Gastrocnemius medialis (tissue), 4 donors: ENCODE measurements at regions of chr11 and their contacts with region 1.

Region 1: GRCh38 chr11:57667736-57668435 is at the start of gene ZDHHC5:
- DNase-seq: peak; percentile 99
- ATAC-seq: peak; percentile 90 to 92
- H3K4me3 ChIP-seq: peak within 1 kb of the TSS; percentile 70 to 85 (median 76)
- H3K27ac ChIP-seq: peak within 1 kb of the TSS; percentile 92 to 97 (median 94)
- H3K4me1 ChIP-seq: peaks cover 19 to 34% of the 10 kb centered on the region in 2 donors
- H3K27me3 ChIP-seq: no peaks in the 10 kb centered on the region
- CTCF ChIP-seq: peak in 4 of 5 experiments; percentile 35 to 79 (median 69)
- POLR2A ChIP-seq: peak; percentile 81 to 85
- total RNA-seq, gene ZDHHC5: 34.0 to 49.2 (median 46.2) TPM

Region 2: DNA sequence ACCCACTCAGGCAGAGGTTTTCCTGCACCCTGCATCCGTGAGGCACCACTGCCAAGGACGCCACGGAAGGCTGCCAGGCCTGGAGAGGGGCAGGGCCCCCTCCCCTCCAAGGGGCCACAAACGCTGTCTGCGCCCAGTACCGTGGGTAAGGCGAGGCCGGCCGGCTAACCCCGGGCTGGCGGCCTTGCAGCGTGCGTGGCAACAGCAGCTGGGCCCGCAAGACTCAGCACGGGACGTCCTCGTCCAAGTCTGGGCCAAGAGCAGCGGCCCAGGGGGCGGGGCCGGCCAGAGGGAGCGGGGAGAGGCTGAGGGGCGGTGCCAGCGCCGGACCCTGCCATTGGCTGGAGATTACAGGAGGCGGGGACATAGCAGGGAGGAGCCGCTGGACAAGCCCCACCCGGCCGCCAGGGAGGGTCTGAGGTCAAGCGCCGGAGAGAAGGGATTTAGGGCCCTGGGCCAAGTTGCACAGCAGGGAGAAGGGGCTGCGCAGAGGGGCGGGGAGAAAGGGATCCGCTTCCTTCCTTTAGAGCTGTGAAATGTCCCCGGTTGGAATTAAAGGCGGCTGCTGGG is 168.4 kb before region 1 on chr11:
- in situ Hi-C with region 1: no loop called
- intact Hi-C with region 1: loop called (anchors 1 kb)
- DNase-seq: peak; percentile 98 to 99
- ATAC-seq: peak; percentile 90 to 91
- H3K4me3 ChIP-seq: peak overlapping the region; percentile 29 to 53 (median 44)
- H3K27ac ChIP-seq: peak overlapping the region; percentile 87 to 95 (median 92)
- H3K4me1 ChIP-seq: peaks cover 30 to 40% of the 10 kb centered on the region in 2 donors
- H3K27me3 ChIP-seq: no peaks in the 10 kb centered on the region
- CTCF ChIP-seq: peak in 2 of 5 experiments; percentile 28 to 34
- POLR2A ChIP-seq: peak; percentile 67 to 81

Region 3: GRCh38 chr11:57657194-57658022 is 10.5 kb before region 1 on chr11 and contains the start of gene CLP1:
- in situ Hi-C with region 1: no loop called
- intact Hi-C with region 1: loop called (anchors 1 kb)
- DNase-seq: peak; percentile 99
- ATAC-seq: peak; percentile 99
- H3K4me3 ChIP-seq: peak within 1 kb of the TSS; percentile 62 to 92 (median 79)
- H3K27ac ChIP-seq: peak within 1 kb of the TSS; percentile 84 to 94 (median 91)
- H3K4me1 ChIP-seq: peaks cover 8 to 23% of the 10 kb centered on the region in 2 donors
- H3K27me3 ChIP-seq: no peaks in the 10 kb centered on the region
- CTCF ChIP-seq: no peak
- POLR2A ChIP-seq: peak; percentile 64 to 80
- total RNA-seq, gene CLP1: 10.6 to 15.3 (median 11.2) TPM

Region 4: DNA sequence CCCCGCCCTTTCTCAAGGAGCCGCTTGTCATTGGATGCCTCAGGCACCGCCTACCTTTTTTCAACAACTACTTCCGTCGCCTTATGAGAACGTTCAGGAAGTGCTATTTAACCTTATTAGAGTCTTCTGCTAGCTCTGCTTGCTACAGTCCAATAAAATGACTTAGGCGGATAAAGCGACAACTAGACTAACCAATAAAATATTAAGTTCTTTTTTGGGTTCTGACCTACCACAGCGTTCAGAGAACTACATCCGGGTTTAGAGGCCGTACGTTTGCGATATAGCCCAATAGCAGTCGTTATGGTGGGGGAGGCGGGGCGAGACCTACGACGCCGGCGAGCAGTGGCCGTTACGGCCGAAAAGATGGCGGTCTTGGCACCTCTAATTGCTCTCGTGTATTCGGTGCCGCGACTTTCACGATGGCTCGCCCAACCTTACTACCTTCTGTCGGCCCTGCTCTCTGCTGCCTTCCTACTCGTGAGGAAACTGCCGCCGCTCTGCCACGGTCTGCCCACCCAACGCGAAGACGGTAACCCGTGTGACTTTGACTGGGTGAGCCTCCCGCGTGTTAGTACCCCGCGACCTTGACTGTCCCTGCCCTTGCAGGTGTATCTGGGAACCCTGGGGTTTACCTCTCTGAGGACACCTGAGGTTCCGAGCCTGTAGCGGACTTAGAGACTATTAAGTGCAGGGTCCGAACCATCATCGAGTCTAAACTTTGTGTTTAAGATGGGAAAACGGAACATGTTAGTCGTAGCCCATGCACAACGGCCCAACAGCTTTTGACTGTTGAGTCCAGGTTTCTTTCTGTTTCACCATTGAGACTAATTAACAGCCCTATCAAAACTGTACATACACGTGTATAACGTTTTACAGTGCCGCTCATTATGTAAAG is 44.6 kb after region 1 on chr11 and contains the start of gene TMX2:
- in situ Hi-C with region 1: no loop called
- intact Hi-C with region 1: loop called (anchors 1 kb)
- DNase-seq: peak; percentile 90 to 95
- ATAC-seq: peak; percentile 98
- H3K4me3 ChIP-seq: peak within 1 kb of the TSS; percentile 82 to 99 (median 92)
- H3K27ac ChIP-seq: peak within 1 kb of the TSS; percentile 87 to 91 (median 89)
- H3K4me1 ChIP-seq: peaks cover 33 to 34% of the 10 kb centered on the region in 2 donors
- H3K27me3 ChIP-seq: no peaks in the 10 kb centered on the region
- CTCF ChIP-seq: peak in 1 of 5 experiments; percentile 3
- POLR2A ChIP-seq: peak; percentile 49 to 59
- total RNA-seq, gene TMX2: 29.1 to 54.9 (median 40.5) TPM

Region 5: GRCh38 chr11:57741132-57742086 is 73.5 kb after region 1 on chr11 and contains the start of gene SELENOH:
- in situ Hi-C with region 1: no loop called
- intact Hi-C with region 1: loop called (anchors 1 kb)
- DNase-seq: peak; percentile 95 to 96
- ATAC-seq: peak; percentile 95 to 97
- H3K4me3 ChIP-seq: peak within 1 kb of the TSS; percentile 77 to 100 (median 90)
- H3K27ac ChIP-seq: peak within 1 kb of the TSS; percentile 94 to 99 (median 98)
- H3K4me1 ChIP-seq: peaks cover 15 to 17% of the 10 kb centered on the region in 2 donors
- H3K27me3 ChIP-seq: no peaks in the 10 kb centered on the region
- CTCF ChIP-seq: no peak
- POLR2A ChIP-seq: peak; percentile 84
- total RNA-seq, gene SELENOH: 94.7 to 145 (median 132) TPM

Region 6: GRCh38 chr11:57761301-57762234 is 93.7 kb after region 1 on chr11 and contains the start of gene CTNND1:
- in situ Hi-C with region 1: no loop called
- intact Hi-C with region 1: loop called (anchors 1 kb)
- DNase-seq: peak; percentile 92 to 95
- ATAC-seq: peak; percentile 100
- H3K4me3 ChIP-seq: peak within 1 kb of the TSS; percentile 66 to 83 (median 78)
- H3K27ac ChIP-seq: peak within 1 kb of the TSS; percentile 90 to 97 (median 93)
- H3K4me1 ChIP-seq: peaks cover 34 to 37% of the 10 kb centered on the region in 2 donors
- H3K27me3 ChIP-seq: no peaks in the 10 kb centered on the region
- CTCF ChIP-seq: no peak
- POLR2A ChIP-seq: peak; percentile 67 to 80
- total RNA-seq, gene CTNND1: 19.7 to 29.8 (median 24.5) TPM

Region 7: GRCh38 chr11:57815476-57815875 is 147.6 kb after region 1 on chr11:
- in situ Hi-C with region 1: no loop called
- intact Hi-C with region 1: no loop called
- DNase-seq: no peak
- ATAC-seq: no peak
- H3K4me3 ChIP-seq: no peak overlapping the region
- H3K27ac ChIP-seq: no peak overlapping the region
- H3K4me1 ChIP-seq: no peaks in the 10 kb centered on the region
- H3K27me3 ChIP-seq: no peaks in the 10 kb centered on the region
- CTCF ChIP-seq: no peak
- POLR2A ChIP-seq: no peak